Activated CD4-positive, alpha-beta memory T cell treated with anti-CD3 and anti-CD28 coated beads for 36 hours (primary cell): ENCODE measurements at regions of chr2 and their contacts with region 1.

Region 1: DNA sequence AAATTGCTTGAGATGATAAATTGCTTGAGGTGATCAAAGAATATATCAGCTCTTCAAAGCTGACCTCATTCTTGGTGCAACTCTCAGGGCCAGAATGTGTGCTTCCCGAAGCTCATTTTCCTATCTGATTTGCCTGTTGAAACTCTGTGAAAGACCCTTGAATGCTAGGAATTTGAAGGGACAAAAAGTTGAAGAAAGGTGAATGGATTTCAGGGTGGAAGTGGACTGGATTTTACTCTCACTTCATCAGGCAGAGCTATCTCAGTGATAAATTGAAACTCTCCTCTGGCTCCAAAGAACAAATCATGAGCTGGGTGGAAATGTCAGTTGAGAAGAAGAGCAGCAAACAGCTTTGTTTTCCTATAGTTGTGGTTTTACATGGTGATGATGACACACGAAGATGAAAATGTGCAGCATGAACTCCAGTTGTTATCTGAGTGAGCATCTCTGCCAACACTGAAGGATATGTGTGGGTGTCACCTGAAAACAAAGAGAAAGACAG is 34.4 kb downstream of the CD28 start:
- DNase-seq: peak; percentile 65
- H3K4me3 Mint-ChIP-seq: peak overlapping the region; percentile 58
- H3K27ac Mint-ChIP-seq: peak overlapping the region; percentile 99
- H3K4me1 Mint-ChIP-seq: peaks cover 90% of the 10 kb centered on the region
- H3K27me3 Mint-ChIP-seq: no peaks in the 10 kb centered on the region

Region 2: DNA sequence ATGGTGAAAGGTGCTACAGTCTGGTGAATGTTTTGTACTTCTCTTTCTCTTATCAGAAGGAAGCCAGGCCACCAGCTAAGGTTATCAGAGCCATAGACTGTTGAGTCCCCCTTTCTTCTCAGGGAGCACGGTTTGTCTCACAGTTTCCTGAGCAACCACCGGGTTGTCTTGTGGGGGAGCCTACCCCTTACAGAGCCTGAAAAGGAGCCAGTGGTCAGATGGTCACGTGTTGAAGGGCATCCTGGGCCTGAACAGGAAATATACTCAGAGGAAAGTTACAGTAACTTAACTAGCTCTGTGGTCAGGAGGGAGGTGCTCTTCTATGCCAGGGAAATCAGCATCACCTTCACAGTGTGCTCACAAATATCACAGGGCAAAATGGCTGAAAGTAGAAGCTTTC is 22.7 kb before region 1 on chr2:
- CTCF ChIA-PET with region 1: interaction called, 29 read pairs
- POLR2A ChIA-PET with region 1: interaction called, 204 read pairs
- intact Hi-C with region 1: loop called (anchors 1 kb)
- DNase-seq: peak; percentile 85
- H3K4me3 Mint-ChIP-seq: peak overlapping the region; percentile 69
- H3K27ac Mint-ChIP-seq: peak overlapping the region; percentile 94
- H3K4me1 Mint-ChIP-seq: peaks cover 96% of the 10 kb centered on the region
- H3K27me3 Mint-ChIP-seq: no peaks in the 10 kb centered on the region

Region 3: DNA sequence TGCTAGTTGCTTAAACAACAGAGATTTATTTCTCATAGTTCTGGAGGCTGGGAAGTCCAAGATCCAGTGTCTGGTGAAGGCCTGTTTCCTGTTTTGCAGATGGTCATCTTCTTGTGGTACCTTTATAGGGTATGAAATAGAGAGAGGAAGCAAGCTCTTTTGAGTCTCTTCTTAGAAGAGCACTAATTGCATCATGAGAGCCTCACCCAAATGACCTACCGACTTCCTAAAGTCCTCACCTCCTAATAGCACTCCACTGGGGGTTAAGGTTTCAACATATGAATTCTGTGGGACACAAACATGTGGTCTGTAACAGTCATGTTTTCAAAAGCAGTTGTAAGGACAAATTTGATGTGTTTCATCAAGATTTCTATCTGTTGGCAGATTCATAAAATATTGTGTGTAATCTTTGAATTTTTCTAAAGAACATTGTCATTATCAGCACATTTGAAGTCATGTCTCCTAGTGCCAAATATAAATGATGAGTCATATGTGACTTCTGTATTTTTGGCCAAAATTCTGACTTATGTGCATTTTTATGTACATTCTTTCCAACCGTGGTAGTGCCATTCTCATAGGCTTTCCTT is 10.9 kb after region 1 on chr2:
- CTCF ChIA-PET with region 1: interaction called, 23 read pairs
- POLR2A ChIA-PET with region 1: interaction called, 62 read pairs
- intact Hi-C with region 1: loop called (anchors 1 kb)
- DNase-seq: no peak
- H3K4me3 Mint-ChIP-seq: no peak overlapping the region
- H3K27ac Mint-ChIP-seq: peak overlapping the region; percentile 81
- H3K4me1 Mint-ChIP-seq: peaks cover 56% of the 10 kb centered on the region
- H3K27me3 Mint-ChIP-seq: no peaks in the 10 kb centered on the region

Region 4: DNA sequence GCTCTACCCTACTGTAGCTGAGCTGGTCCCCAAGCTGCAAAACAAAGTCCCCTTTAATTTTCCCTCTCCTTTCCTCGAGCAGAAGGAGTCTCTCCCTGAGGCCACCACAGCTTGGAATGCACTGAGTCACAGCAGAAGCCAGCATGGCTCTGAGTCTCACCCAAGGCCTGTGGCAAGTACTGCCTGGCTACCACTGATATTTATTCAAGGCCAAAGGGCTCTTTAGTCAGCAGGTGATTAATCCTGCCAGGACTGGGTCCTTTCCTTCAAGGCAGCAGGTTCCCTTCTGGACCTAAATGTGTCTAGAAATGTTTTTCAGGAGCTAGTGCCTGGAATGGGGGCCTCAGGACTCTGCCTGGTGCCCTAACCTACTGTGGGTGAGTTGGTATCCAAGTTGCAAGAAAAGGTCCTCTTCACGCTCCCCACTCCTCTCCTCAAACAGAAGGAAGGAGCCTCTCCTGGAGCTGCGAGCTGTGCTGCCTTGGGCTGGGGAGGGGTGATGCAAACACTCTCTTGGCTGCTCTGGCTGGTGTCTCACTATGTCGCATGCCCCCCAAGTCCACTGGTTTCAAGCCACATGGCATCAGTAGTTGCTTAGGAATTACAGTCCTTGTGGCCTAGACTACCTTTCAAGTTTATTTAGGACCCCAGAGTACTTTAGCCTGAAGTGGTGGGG is 19.0 kb after region 1 on chr2:
- CTCF ChIA-PET with region 1: interaction called, 6 read pairs
- POLR2A ChIA-PET with region 1: interaction called, 34 read pairs
- intact Hi-C with region 1: loop called (anchors 1 kb)
- DNase-seq: no peak
- H3K4me3 Mint-ChIP-seq: no peak overlapping the region
- H3K27ac Mint-ChIP-seq: no peak overlapping the region
- H3K4me1 Mint-ChIP-seq: peaks cover 63% of the 10 kb centered on the region
- H3K27me3 Mint-ChIP-seq: no peaks in the 10 kb centered on the region

Region 5: DNA sequence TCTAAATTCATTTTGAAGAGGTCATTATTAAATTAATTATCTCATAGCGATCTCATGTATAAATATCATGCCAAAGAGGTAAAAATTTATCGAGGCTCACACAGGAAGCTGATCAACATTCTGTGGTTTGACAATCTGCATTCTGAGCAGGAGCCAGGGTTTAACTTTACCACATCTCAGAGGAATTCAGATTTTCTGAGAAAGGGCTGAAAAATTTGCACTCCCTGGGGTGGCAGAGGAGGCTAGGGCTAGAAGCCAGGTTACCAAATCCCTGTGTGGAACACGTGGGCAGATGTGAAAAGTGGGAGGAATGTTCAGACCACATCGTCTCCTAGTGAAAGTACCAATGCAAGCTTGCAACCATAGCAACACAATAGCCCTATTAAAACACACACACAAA is 63.2 kb after region 1 on chr2:
- CTCF ChIA-PET with region 1: interaction called, 3 read pairs
- POLR2A ChIA-PET with region 1: interaction called, 18 read pairs
- intact Hi-C with region 1: loop called (anchors 1 kb)
- DNase-seq: peak; percentile 63
- H3K4me3 Mint-ChIP-seq: no peak overlapping the region
- H3K27ac Mint-ChIP-seq: peak overlapping the region; percentile 11
- H3K4me1 Mint-ChIP-seq: peaks cover 83% of the 10 kb centered on the region
- H3K27me3 Mint-ChIP-seq: no peaks in the 10 kb centered on the region